Activated CD8-positive, alpha-beta T cell treated with anti-CD3 and anti-CD28 coated beads for 36 hours (primary cell): ENCODE measurements at regions of chr10 and their contacts with region 1.

Region 1: GRCh38 chr10:102140184-102140583 is 7.3 kb downstream of the PPRC1 start:
- DNase-seq: no peak
- ATAC-seq: no peak
- H3K4me3 Mint-ChIP-seq: no peak overlapping the region
- H3K27ac Mint-ChIP-seq: no peak overlapping the region
- H3K4me1 Mint-ChIP-seq: peaks cover 22% of the 10 kb centered on the region
- H3K27me3 Mint-ChIP-seq: no peaks in the 10 kb centered on the region
- CTCF ChIP-seq: no peak

Region 2: GRCh38 chr10:101974091-101974971 is 165.9 kb before region 1 on chr10:
- CTCF ChIA-PET with region 1: no interaction called
- POLR2A ChIA-PET with region 1: no interaction called
- intact Hi-C with region 1: no loop called
- DNase-seq: peak; percentile 2
- ATAC-seq: no peak
- H3K4me3 Mint-ChIP-seq: peak overlapping the region; percentile 44
- H3K27ac Mint-ChIP-seq: peak overlapping the region; percentile 70
- H3K4me1 Mint-ChIP-seq: peaks cover 23% of the 10 kb centered on the region
- H3K27me3 Mint-ChIP-seq: no peaks in the 10 kb centered on the region
- CTCF ChIP-seq: no peak

Region 3: GRCh38 chr10:102120142-102120990 is 19.8 kb before region 1 on chr10 and contains the start of gene LDB1:
- CTCF ChIA-PET with region 1: interaction called, 3 read pairs
- POLR2A ChIA-PET with region 1: interaction called, 65 read pairs
- intact Hi-C with region 1: no loop called
- DNase-seq: peak; percentile 72
- ATAC-seq: peak; percentile 35
- H3K4me3 Mint-ChIP-seq: peak within 1 kb of the TSS; percentile 84
- H3K27ac Mint-ChIP-seq: peak within 1 kb of the TSS; percentile 100
- H3K4me1 Mint-ChIP-seq: peaks cover 41% of the 10 kb centered on the region
- H3K27me3 Mint-ChIP-seq: no peaks in the 10 kb centered on the region
- CTCF ChIP-seq: no peak
- total RNA-seq, gene LDB1: 68.5 to 70.9 TPM

Region 4: GRCh38 chr10:102159051-102159597 is 18.9 kb after region 1 on chr10:
- CTCF ChIA-PET with region 1: no interaction called
- POLR2A ChIA-PET with region 1: interaction called, 250 read pairs
- intact Hi-C with region 1: no loop called
- DNase-seq: no peak
- ATAC-seq: no peak
- H3K4me3 Mint-ChIP-seq: no peak overlapping the region
- H3K27ac Mint-ChIP-seq: no peak overlapping the region
- H3K4me1 Mint-ChIP-seq: peaks cover 44% of the 10 kb centered on the region
- H3K27me3 Mint-ChIP-seq: no peaks in the 10 kb centered on the region
- CTCF ChIP-seq: no peak